Psoas muscle (tissue), 8 donors: ENCODE measurements at regions of chr6 and their contacts with region 1.

Region 1: DNA sequence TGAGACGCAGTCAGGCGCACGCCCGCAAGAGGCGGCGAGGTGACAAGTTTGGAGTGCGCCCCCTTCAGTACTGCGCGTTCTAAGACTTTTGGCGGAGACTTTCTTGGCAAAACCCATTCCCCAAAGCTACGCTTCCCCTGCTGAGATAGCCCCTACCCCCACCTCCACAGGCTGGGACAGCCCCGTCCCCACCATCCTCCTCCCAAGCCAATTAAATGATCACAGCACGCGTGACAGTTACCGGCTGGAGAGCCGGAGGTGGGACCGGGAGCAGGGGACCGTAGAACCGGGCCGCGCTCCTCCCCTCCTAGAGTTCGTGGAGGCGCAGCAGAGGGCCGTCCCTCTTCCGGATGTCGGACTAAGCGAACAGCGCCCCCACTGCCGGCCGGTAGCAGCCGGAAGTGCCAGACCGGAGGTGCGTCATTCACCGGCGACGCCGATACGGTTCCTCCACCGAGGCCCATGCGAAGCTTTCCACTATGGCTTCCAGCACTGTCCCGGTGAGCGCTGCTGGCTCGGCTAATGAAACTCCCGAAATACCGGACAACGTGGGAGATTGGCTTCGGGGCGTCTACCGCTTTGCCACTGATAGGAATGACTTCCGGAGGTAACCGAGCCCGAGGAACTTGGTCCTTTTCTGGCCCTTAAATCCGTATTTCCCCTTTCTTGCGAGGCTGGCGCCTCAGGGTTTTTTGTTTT is at the start of gene TOMM6:
- DNase-seq: peak; percentile 95 to 98
- ATAC-seq: peak; percentile 90 to 95 (median 93)
- H3K4me3 ChIP-seq: peak within 1 kb of the TSS; percentile 75
- H3K27ac ChIP-seq: peak within 1 kb of the TSS; percentile 85
- H3K4me1 ChIP-seq: peaks cover 30% of the 10 kb centered on the region
- H3K27me3 ChIP-seq: no peaks in the 10 kb centered on the region
- CTCF ChIP-seq: peak; percentile 92
- total RNA-seq, gene TOMM6: 156 to 181 (median 168) TPM

Region 2: DNA sequence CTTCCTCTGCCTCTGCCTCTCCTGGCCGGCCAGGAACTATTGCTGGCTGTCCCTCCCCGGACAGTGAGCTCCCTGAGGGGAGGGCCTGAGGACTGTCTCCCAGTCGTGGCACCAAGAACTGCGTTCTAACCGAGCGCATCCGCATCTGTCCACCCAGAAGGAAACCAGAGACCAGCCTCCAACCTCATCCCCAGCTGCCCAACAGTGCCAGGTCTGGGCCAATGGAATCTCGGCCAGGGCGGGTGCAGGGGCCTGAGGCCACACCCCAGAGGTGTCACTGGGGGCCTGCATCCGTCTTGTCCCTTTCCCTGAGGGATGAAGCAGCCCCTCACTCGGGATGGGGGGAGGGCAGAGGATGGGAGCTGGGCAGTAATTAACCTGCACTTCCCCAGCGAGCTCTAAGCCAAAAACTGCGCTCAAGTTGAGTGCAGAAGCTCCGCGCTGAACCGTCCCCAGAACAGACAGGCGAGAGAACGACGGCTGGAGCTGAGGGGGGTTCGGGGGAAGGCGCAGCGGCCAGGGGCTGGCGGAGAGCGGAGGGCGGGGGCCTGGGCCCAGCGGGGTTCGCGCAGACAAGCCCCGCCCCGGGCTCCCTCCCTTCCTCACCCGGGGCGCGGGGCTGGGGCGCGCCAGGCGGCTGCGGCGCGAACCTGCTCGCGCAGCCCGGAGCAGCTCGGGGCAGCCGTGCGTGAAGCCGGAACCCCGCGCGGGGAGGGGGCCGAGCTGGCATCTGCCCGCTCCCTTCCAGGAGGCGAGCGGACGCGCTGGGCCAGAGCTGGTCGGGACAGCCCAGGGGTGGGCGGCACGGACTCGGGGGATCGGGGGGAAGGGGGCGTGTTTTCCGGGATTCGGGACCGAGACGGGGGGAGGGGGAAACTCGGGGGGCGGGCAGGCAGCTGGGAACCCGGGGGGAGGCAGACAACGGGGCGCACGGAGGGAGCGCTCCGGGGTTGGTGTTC is 53.4 kb before region 1 on chr6:
- intact Hi-C with region 1: no loop called
- DNase-seq: peak; percentile 75 to 87
- ATAC-seq: peak; percentile 60 to 69 (median 66)
- H3K4me3 ChIP-seq: peak overlapping the region; percentile 88
- H3K27ac ChIP-seq: peak overlapping the region; percentile 96
- H3K4me1 ChIP-seq: peaks cover 44% of the 10 kb centered on the region
- H3K27me3 ChIP-seq: no peaks in the 10 kb centered on the region
- CTCF ChIP-seq: no peak

Region 3: GRCh38 chr6:41846666-41847237 is 59.4 kb after region 1 on chr6:
- intact Hi-C with region 1: loop called in 1 of 2 experiments (anchors 10 kb)
- DNase-seq: no peak
- ATAC-seq: peak; percentile 61 to 93 (median 88)
- H3K4me3 ChIP-seq: no peak overlapping the region
- H3K27ac ChIP-seq: peak overlapping the region; percentile 42
- H3K4me1 ChIP-seq: no peaks in the 10 kb centered on the region
- H3K27me3 ChIP-seq: no peaks in the 10 kb centered on the region
- CTCF ChIP-seq: peak; percentile 73

Region 4: GRCh38 chr6:41895300-41896233 is 108.2 kb after region 1 on chr6 and contains the start of gene USP49:
- intact Hi-C with region 1: loop called in 1 of 2 experiments (anchors 10 kb)
- DNase-seq: peak; percentile 92 to 95
- ATAC-seq: peak; percentile 98 to 100 (median 100)
- H3K4me3 ChIP-seq: peak within 1 kb of the TSS; percentile 81
- H3K27ac ChIP-seq: peak within 1 kb of the TSS; percentile 81
- H3K4me1 ChIP-seq: peaks cover 16% of the 10 kb centered on the region
- H3K27me3 ChIP-seq: no peaks in the 10 kb centered on the region
- CTCF ChIP-seq: no peak
- total RNA-seq, gene USP49: 0.75 to 1.6 (median 1.3) TPM

Region 5: DNA sequence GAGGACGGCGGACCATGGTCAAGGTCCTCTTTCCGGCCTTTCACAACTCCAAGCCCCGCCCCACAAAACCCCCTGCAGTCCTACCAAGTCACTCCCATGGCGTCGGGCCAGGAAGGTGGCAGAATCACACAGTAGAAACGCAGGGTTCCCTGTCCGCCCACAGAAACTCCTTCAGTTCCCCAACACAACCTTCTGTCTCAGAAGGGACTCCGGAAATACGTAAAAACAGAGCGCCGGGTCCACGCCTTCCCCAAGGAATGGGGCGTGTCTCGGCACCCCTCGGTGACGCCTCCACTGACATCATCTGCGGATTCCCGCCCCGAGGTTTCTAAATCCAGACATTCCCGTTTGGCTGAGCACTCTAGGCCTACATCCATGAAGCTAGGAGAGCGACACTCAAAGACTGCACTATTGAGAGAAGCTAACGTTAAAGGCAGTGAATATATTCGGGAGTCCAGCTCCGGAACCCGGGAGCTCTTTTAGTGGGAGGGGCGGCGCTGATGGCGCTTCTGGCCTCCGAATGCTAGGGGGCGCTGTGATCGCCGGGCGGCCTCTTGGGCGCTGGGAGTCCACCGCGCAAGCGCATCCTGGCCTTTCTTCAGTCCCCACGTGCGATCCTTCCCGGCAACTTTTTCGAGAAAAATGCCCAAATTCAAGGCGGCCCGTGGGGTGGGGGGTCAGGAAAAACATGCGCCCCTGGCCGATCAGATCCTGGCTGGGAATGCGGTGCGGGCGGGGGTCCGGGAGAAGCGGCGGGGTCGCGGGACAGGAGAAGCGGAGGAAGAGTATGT is 133.7 kb after region 1 on chr6 and contains the starts of genes BYSL and MED20:
- intact Hi-C with region 1: loop called (anchors 2 kb)
- DNase-seq: peak; percentile 92 to 96
- ATAC-seq: peak; percentile 97 to 99 (median 98)
- H3K4me3 ChIP-seq: peak within 1 kb of the TSS; percentile 87
- H3K27ac ChIP-seq: peak within 1 kb of the TSS; percentile 99
- H3K4me1 ChIP-seq: peaks cover 30% of the 10 kb centered on the region
- H3K27me3 ChIP-seq: no peaks in the 10 kb centered on the region
- CTCF ChIP-seq: peak; percentile 96
- total RNA-seq, gene BYSL: 20.3 to 47.5 (median 35.2) TPM
- total RNA-seq, gene MED20: 12.9 to 19.6 (median 15.0) TPM